Stomach (tissue), 19 donors: ENCODE measurements at regions of chr4 and their contacts with region 1.

Region 1: GRCh38 chr4:38768968-38769394 is 13.8 kb downstream of the TLR10 start:
- DNase-seq: peak in 1 of 2 donors; percentile 50
- H3K4me3 ChIP-seq: no peak overlapping the region
- H3K27ac ChIP-seq: peak overlapping the region in 1 of 5 donors; percentile 22
- H3K4me1 ChIP-seq: no peaks in the 10 kb centered on the region
- H3K27me3 ChIP-seq: no peaks in the 10 kb centered on the region
- CTCF ChIP-seq: no peak
- EP300 ChIP-seq: no peak
- POLR2A ChIP-seq: no peak

Region 2: GRCh38 chr4:38856524-38857337 is 87.8 kb after region 1 on chr4 and contains the start of gene TLR6:
- intact Hi-C with region 1: loop called (anchors 10 kb)
- DNase-seq: peak; percentile 68 to 78
- H3K4me3 ChIP-seq: peak within 1 kb of the TSS in 3 of 4 donors; percentile 11 to 27 (median 18)
- H3K27ac ChIP-seq: peak within 1 kb of the TSS in 4 of 5 donors; percentile 52 to 88 (median 74)
- H3K4me1 ChIP-seq: peaks cover 0 to 23% (median 8%) of the 10 kb centered on the region in 4 donors
- H3K27me3 ChIP-seq: no peaks in the 10 kb centered on the region
- CTCF ChIP-seq: peak in 5 of 7 experiments; percentile 52 to 86 (median 70)
- EP300 ChIP-seq: no peak
- POLR2A ChIP-seq: no peak
- total RNA-seq, gene TLR6: 3.3 to 29.0 (median 4.3) TPM in 3 of 5 donors, not detected in the others